Panc1 (cell line): ENCODE measurements at regions of chr7 and their contacts with region 1.

Region 1: GRCh38 chr7:19294619-19295018 is 149.4 kb upstream of the FERD3L start:
- DNase-seq: no peak
- ATAC-seq: no peak
- H3K4me3 ChIP-seq: no peak overlapping the region
- H3K27ac ChIP-seq: no peak overlapping the region
- H3K4me1 ChIP-seq: no peaks in the 10 kb centered on the region
- H3K27me3 ChIP-seq: no peaks in the 10 kb centered on the region
- CTCF ChIP-seq: no peak

Region 2: GRCh38 chr7:19248115-19248514 is 46.5 kb before region 1 on chr7:
- CTCF ChIA-PET with region 1: no interaction called
- POLR2A ChIA-PET with region 1: interaction called, 16 read pairs
- in situ Hi-C with region 1: no loop called
- intact Hi-C with region 1: no loop called
- DNase-seq: no peak
- ATAC-seq: no peak
- H3K4me3 ChIP-seq: no peak overlapping the region
- H3K27ac ChIP-seq: no peak overlapping the region
- H3K4me1 ChIP-seq: no peaks in the 10 kb centered on the region
- H3K27me3 ChIP-seq: no peaks in the 10 kb centered on the region
- CTCF ChIP-seq: no peak